ENCODE measurements at regions of chr7 and their contacts with region 1.

Region 1: DNA sequence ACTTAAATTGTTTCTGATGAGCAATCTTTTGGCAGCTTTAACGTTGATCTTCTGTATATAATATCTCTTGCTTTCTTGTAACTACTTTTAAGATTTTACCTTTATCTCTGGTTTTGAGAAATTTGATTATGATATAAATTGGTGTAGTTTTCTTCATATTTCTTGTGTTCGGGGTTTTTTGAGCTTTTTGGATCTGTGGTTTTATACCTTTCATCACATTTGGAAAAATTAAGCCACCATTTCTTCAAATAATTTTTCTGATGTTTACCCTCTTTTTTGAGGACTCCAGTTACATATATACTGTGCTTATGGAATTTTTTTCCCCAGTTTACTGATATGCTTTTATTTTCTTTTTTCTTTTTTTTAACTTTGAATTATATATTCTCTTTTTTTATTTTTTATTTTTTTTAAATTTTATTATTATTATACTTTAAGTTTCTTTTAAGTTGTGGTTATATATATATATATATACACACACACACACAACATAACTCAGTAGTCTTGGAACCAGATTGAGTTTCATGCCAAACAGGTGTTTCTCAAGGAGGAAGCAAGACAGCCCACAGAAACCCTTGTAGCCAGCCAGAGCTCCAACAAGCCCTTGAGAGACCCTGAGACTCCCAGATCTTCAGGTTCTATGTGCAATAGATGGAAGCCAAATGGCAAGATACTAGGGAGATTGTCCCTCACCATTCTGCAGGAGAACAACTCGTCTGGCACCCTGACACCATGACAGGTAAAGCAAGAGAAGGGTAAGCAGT is 27.5 kb upstream of the NME8 start:
- DNase-seq: no peak
- ATAC-seq: no peak
- H3K4me3 Mint-ChIP-seq: no peak overlapping the region
- H3K27ac Mint-ChIP-seq: no peak overlapping the region
- H3K4me1 Mint-ChIP-seq: peaks cover 11% of the 10 kb centered on the region
- H3K27me3 Mint-ChIP-seq: peaks cover 14% of the 10 kb centered on the region
- CTCF ChIP-seq: no peak

Region 2: DNA sequence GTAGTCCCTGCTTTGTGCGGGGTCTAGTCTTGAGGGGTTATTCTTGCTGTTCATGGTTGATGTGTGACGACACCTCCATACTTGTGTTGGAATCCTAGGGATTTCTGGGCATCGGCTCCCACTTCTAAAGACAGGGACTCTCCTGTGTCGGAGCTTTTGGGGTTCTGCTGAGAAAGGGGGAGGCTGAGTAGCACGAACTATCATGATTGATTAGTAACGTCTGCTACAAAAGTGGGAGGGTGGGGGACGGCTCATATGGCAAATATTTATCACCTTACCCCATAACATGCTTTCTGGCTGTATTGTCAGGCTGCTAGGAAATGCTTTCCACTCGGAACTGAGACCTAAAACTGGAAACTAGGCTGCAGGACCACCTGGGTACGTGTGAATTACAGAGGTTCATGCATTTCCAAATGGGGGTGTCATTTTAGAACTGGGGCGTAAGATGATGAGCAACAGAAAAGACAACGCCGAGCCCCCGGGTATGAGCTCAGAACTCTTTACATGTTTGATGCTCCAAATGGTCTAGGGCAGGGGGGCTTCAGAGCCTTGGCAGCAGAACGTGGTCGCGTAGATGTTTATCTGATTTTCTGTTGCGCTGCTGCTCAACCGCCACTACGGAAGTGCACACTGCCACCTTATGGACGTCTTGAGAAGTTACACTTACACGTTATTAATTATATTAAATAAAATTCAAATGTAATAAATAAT is 12.4 kb after region 1 on chr7:
- CTCF ChIA-PET with region 1: interaction called, 15 read pairs
- POLR2A ChIA-PET with region 1: no interaction called
- intact Hi-C with region 1: no loop called
- DNase-seq: peak; percentile 39
- ATAC-seq: peak; percentile 62
- H3K4me3 Mint-ChIP-seq: peak overlapping the region; percentile 68
- H3K27ac Mint-ChIP-seq: no peak overlapping the region
- H3K4me1 Mint-ChIP-seq: peaks cover 3% of the 10 kb centered on the region
- H3K27me3 Mint-ChIP-seq: peaks cover 3% of the 10 kb centered on the region
- CTCF ChIP-seq: peak; percentile 88